CD4-positive, alpha-beta memory T cell (primary cell): ENCODE measurements at regions of chr7 and their contacts with region 1.

Region 1: DNA sequence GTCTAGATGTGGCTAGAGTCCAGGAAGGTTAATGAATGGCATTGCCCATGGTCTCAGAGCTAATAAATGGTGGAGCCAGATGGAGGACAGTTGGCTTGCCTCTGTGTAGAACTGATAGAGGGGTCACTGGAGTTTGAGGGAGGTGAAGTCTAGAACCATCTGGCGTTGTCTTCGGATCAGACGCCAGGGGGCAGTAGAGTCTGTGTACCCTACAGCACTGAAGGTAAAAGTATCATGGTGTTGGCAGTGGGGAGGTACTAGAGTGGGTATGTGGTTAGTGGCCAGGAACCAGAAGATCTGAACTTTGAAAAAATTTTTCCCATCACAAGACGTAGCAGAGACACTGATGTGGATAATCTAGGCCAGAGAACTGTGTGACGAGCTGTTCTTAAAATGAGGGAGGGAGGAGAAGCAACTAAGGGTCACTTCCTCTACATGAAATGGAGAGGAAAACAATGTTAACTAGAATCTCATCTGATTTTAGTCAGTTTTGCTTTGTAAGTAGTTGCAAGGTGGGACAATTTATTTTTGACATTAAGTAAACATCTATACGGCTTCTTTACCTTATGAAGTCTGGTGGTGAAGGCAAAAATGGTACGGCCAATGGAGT is 227.9 kb upstream of the PRSS58 start:
- DNase-seq: peak in 3 of 5 donors; percentile 24 to 35 (median 31)
- H3K4me3 ChIP-seq: no peak overlapping the region
- H3K4me3 Mint-ChIP-seq: peak overlapping the region in 1 of 8 donors; percentile 40
- H3K27ac ChIP-seq: no peak overlapping the region
- H3K27ac Mint-ChIP-seq: peak overlapping the region in 6 of 7 donors; percentile 11 to 85 (median 56)
- H3K4me1 ChIP-seq: peaks cover 35% of the 10 kb centered on the region
- H3K4me1 Mint-ChIP-seq: peaks cover 30 to 53% (median 37%) of the 10 kb centered on the region in 4 donors
- H3K27me3 ChIP-seq: no peaks in the 10 kb centered on the region
- H3K27me3 Mint-ChIP-seq: no peaks in the 10 kb centered on the region

Region 2: GRCh38 chr7:142412551-142413193 is 73.0 kb before region 1 on chr7:
- CTCF ChIA-PET with region 1: interaction called, 13 read pairs
- POLR2A ChIA-PET with region 1: interaction called, 3 read pairs
- intact Hi-C with region 1: loop called (anchors 1 kb)
- DNase-seq: peak; percentile 38 to 48 (median 41)
- H3K4me3 ChIP-seq: no peak overlapping the region
- H3K4me3 Mint-ChIP-seq: peak overlapping the region in 4 of 8 donors; percentile 8 to 36 (median 24)
- H3K27ac ChIP-seq: no peak overlapping the region
- H3K27ac Mint-ChIP-seq: peak overlapping the region in 4 of 7 donors; percentile 18 to 74 (median 28)
- H3K4me1 ChIP-seq: no peaks in the 10 kb centered on the region
- H3K4me1 Mint-ChIP-seq: peaks cover 1 to 6% (median 3%) of the 10 kb centered on the region in 4 donors
- H3K27me3 ChIP-seq: no peaks in the 10 kb centered on the region
- H3K27me3 Mint-ChIP-seq: no peaks in the 10 kb centered on the region

Region 3: GRCh38 chr7:142516038-142516501 is 30.3 kb after region 1 on chr7:
- CTCF ChIA-PET with region 1: interaction called, 12 read pairs
- POLR2A ChIA-PET with region 1: interaction called, 7 read pairs
- intact Hi-C with region 1: loop called (anchors 5 kb)
- DNase-seq: peak in 4 of 5 donors; percentile 33 to 46 (median 44)
- H3K4me3 ChIP-seq: no peak overlapping the region
- H3K4me3 Mint-ChIP-seq: peak overlapping the region in 4 of 8 donors; percentile 18 to 75 (median 30)
- H3K27ac ChIP-seq: no peak overlapping the region
- H3K27ac Mint-ChIP-seq: peak overlapping the region in 3 of 7 donors; percentile 9 to 67 (median 57)
- H3K4me1 ChIP-seq: peaks cover 34% of the 10 kb centered on the region
- H3K4me1 Mint-ChIP-seq: peaks cover 12 to 50% (median 29%) of the 10 kb centered on the region in 4 donors
- H3K27me3 ChIP-seq: no peaks in the 10 kb centered on the region
- H3K27me3 Mint-ChIP-seq: no peaks in the 10 kb centered on the region